Activated B cell treated with CpG ODN at 0.5 μM for 24 hours (primary cell): ENCODE measurements at regions of chr6 and their contacts with region 1.

Region 1: GRCh38 chr6:16684896-16685554 is 76.2 kb downstream of the ATXN1 start:
- DNase-seq: peak; percentile 45
- ATAC-seq: peak; percentile 71
- H3K4me3 Mint-ChIP-seq: peak overlapping the region; percentile 46
- H3K27ac Mint-ChIP-seq: peak overlapping the region; percentile 90
- H3K4me1 Mint-ChIP-seq: peaks cover 61% of the 10 kb centered on the region
- H3K27me3 Mint-ChIP-seq: no peaks in the 10 kb centered on the region
- CTCF ChIP-seq: no peak

Region 2: GRCh38 chr6:16657768-16658167 is 27.3 kb before region 1 on chr6:
- CTCF ChIA-PET with region 1: no interaction called
- POLR2A ChIA-PET with region 1: interaction called, 3 read pairs
- intact Hi-C with region 1: loop called (anchors 2 kb)
- DNase-seq: no peak
- ATAC-seq: peak; percentile 57
- H3K4me3 Mint-ChIP-seq: peak overlapping the region; percentile 45
- H3K27ac Mint-ChIP-seq: no peak overlapping the region
- H3K4me1 Mint-ChIP-seq: peaks cover 36% of the 10 kb centered on the region
- H3K27me3 Mint-ChIP-seq: no peaks in the 10 kb centered on the region
- CTCF ChIP-seq: no peak

Region 3: DNA sequence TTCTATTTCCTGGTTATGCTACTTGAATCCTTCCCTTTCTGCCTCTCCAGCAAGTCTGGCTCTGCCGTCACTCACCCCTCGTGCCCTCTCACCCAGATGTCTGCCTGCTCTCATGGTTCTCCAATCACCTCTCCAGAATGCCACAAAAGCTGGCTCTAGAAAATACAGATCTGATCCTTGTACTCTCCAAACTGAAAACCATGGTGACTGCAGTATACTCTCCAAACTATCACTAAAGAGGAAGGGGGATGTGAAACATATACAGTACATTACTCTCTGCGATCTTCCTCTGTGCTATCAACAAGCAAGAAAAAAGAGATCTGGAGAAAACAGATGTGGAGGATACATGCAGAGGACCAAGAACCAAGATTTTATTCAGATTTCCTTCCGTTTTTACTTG is 14.8 kb before region 1 on chr6:
- CTCF ChIA-PET with region 1: no interaction called
- POLR2A ChIA-PET with region 1: no interaction called
- intact Hi-C with region 1: loop called (anchors 1 kb)
- DNase-seq: no peak
- ATAC-seq: peak; percentile 49
- H3K4me3 Mint-ChIP-seq: no peak overlapping the region
- H3K27ac Mint-ChIP-seq: peak overlapping the region; percentile 61
- H3K4me1 Mint-ChIP-seq: peaks cover 26% of the 10 kb centered on the region
- H3K27me3 Mint-ChIP-seq: no peaks in the 10 kb centered on the region
- CTCF ChIP-seq: no peak

Region 4: GRCh38 chr6:16704401-16705045 is 19.5 kb after region 1 on chr6:
- CTCF ChIA-PET with region 1: no interaction called
- POLR2A ChIA-PET with region 1: interaction called, 3 read pairs
- intact Hi-C with region 1: loop called (anchors 2 kb)
- DNase-seq: no peak
- ATAC-seq: peak; percentile 45
- H3K4me3 Mint-ChIP-seq: peak overlapping the region; percentile 15
- H3K27ac Mint-ChIP-seq: no peak overlapping the region
- H3K4me1 Mint-ChIP-seq: peaks cover 57% of the 10 kb centered on the region
- H3K27me3 Mint-ChIP-seq: peaks cover 8% of the 10 kb centered on the region
- CTCF ChIP-seq: no peak

Region 5: GRCh38 chr6:16723826-16724225 is 38.8 kb after region 1 on chr6:
- CTCF ChIA-PET with region 1: no interaction called
- POLR2A ChIA-PET with region 1: no interaction called
- intact Hi-C with region 1: no loop called
- DNase-seq: no peak
- ATAC-seq: no peak
- H3K4me3 Mint-ChIP-seq: no peak overlapping the region
- H3K27ac Mint-ChIP-seq: no peak overlapping the region
- H3K4me1 Mint-ChIP-seq: peaks cover 2% of the 10 kb centered on the region
- H3K27me3 Mint-ChIP-seq: no peaks in the 10 kb centered on the region
- CTCF ChIP-seq: no peak